Dendritic cell treated with granulocyte-macrophage colony-stimulating factor and Interleukin-4, amounts not matched to agents 40 ng/mL and 50 ng/mL, for 4 days (primary cell): ENCODE measurements at regions of chr3 and their contacts with region 1.

Region 1: DNA sequence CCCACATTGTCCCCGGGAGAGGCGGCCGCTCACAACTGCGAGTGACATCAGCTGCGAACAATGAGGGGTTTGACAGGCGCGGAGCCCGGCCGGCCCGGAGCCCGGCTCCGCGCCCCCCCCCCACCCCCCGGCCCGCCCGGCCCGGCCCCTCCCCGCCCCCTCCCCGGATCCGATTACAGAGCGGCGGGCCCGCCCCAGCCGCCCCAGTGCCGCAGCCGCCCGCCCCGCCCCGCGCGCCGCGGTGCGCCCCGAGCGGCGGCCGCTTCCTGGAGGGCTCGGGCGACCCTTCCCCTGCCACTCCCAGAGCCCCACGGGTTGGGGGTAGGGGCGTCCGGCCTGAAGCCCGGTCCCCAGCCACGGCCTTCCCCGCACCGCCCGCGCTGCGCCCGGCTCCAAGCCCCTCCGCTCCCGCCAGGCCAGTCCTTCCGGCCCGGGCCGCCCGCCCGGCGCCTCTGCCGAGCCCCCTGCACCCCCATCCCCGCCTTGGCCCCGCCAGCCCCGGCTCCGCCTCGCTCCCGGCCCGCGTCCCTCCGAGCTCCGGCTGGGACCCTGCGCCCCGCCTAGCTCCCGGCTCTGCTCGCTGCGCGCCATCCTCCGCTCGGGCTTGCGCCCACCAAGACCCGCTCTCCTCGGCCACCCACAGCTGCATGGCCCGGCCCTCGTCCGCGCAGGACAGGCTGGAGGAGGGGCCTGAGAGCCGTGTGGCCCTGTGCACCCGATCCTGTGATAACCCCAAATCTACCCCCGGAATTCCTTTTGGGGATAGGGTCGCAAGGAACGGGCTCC is at the start of gene PCBP4:
- H3K4me3 Mint-ChIP-seq: peak within 1 kb of the TSS; percentile 87
- H3K27ac Mint-ChIP-seq: peak within 1 kb of the TSS; percentile 44
- H3K4me1 Mint-ChIP-seq: peaks cover 28% of the 10 kb centered on the region
- H3K27me3 Mint-ChIP-seq: peaks cover 62% of the 10 kb centered on the region

Region 2: DNA sequence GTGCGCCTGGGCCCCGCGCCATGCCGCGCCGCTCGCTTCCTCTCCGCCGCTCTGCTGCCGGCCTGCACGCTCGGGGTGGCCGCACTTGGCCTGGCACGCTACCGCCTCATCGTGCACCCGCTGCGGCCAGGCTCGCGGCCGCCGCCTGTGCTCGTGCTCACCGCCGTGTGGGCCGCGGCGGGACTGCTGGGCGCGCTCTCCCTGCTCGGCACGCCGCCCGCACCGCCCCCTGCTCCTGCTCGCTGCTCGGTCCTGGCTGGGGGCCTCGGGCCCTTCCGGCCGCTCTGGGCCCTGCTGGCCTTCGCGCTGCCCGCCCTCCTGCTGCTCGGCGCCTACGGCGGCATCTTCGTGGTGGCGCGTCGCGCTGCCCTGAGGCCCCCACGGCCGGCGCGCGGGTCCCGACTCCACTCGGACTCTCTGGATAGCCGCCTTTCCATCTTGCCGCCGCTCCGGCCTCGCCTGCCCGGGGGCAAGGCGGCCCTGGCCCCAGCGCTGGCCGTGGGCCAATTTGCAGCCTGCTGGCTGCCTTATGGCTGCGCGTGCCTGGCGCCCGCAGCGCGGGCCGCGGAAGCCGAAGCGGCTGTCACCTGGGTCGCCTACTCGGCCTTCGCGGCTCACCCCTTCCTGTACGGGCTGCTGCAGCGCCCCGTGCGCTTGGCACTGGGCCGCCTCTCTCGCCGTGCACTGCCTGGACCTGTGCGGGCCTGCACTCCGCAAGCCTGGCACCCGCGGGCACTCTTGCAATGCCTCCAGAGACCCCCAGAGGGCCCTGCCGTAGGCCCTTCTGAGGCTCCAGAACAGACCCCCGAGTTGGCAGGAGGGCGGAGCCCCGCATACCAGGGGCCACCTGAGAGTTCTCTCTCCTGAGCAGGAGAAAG is 11.4 kb before region 1 on chr3:
- intact Hi-C with region 1: loop called (anchors 2 kb)
- H3K4me3 Mint-ChIP-seq: peak overlapping the region; percentile 51
- H3K27ac Mint-ChIP-seq: no peak overlapping the region
- H3K4me1 Mint-ChIP-seq: peaks cover 49% of the 10 kb centered on the region
- H3K27me3 Mint-ChIP-seq: peaks cover 55% of the 10 kb centered on the region

Region 3: GRCh38 chr3:52070724-52071621 is 103.4 kb after region 1 on chr3:
- intact Hi-C with region 1: no loop called
- H3K4me3 Mint-ChIP-seq: no peak overlapping the region
- H3K27ac Mint-ChIP-seq: peak overlapping the region; percentile 76
- H3K4me1 Mint-ChIP-seq: peaks cover 68% of the 10 kb centered on the region
- H3K27me3 Mint-ChIP-seq: peaks cover 2% of the 10 kb centered on the region